Activated CD8-positive, alpha-beta T cell treated with anti-CD3 and anti-CD28 coated beads for 36 hours (primary cell): ENCODE measurements at regions of chr1 and their contacts with region 1.

Region 1: GRCh38 chr1:97920832-97921571 is at the start of gene DPYD:
- DNase-seq: peak; percentile 91
- ATAC-seq: peak; percentile 84
- H3K4me3 Mint-ChIP-seq: peak within 1 kb of the TSS; percentile 86
- H3K27ac Mint-ChIP-seq: peak within 1 kb of the TSS; percentile 93
- H3K4me1 Mint-ChIP-seq: peaks cover 47% of the 10 kb centered on the region
- H3K27me3 Mint-ChIP-seq: no peaks in the 10 kb centered on the region
- CTCF ChIP-seq: no peak
- total RNA-seq, gene DPYD: 10.7 to 10.8 TPM

Region 2: GRCh38 chr1:97832481-97832880 is 88.5 kb before region 1 on chr1:
- CTCF ChIA-PET with region 1: no interaction called
- POLR2A ChIA-PET with region 1: no interaction called
- intact Hi-C with region 1: loop called (anchors 10 kb)
- DNase-seq: no peak
- ATAC-seq: no peak
- H3K4me3 Mint-ChIP-seq: no peak overlapping the region
- H3K27ac Mint-ChIP-seq: no peak overlapping the region
- H3K4me1 Mint-ChIP-seq: peaks cover 3% of the 10 kb centered on the region
- H3K27me3 Mint-ChIP-seq: no peaks in the 10 kb centered on the region
- CTCF ChIP-seq: no peak

Region 3: DNA sequence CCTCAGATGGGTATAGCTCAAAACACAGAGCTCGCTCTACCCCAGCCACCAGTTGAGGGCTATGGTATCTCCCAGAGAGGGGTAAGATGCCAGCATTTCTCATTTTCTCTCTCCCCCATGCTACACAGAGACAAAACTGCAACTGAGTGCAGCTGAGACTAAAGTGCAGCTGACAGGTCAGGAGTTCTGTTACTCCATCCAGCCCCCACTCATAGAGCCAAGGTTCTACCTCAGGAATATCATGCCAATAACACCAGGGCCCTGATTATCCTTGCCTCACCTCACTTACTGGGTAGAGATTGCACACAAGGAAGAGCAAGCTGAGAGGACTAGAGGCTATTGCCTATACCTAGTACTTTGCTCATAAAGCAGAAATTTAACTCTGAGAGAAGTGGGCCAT is 34.8 kb before region 1 on chr1:
- CTCF ChIA-PET with region 1: no interaction called
- POLR2A ChIA-PET with region 1: no interaction called
- intact Hi-C with region 1: no loop called
- DNase-seq: no peak
- ATAC-seq: no peak
- H3K4me3 Mint-ChIP-seq: no peak overlapping the region
- H3K27ac Mint-ChIP-seq: no peak overlapping the region
- H3K4me1 Mint-ChIP-seq: peaks cover 12% of the 10 kb centered on the region
- H3K27me3 Mint-ChIP-seq: no peaks in the 10 kb centered on the region
- CTCF ChIP-seq: no peak

Region 4: GRCh38 chr1:97943354-97943753 is 22.4 kb after region 1 on chr1:
- CTCF ChIA-PET with region 1: no interaction called
- POLR2A ChIA-PET with region 1: no interaction called
- intact Hi-C with region 1: no loop called
- DNase-seq: no peak
- ATAC-seq: no peak
- H3K4me3 Mint-ChIP-seq: no peak overlapping the region
- H3K27ac Mint-ChIP-seq: no peak overlapping the region
- H3K4me1 Mint-ChIP-seq: peaks cover 25% of the 10 kb centered on the region
- H3K27me3 Mint-ChIP-seq: no peaks in the 10 kb centered on the region
- CTCF ChIP-seq: no peak

Region 5: DNA sequence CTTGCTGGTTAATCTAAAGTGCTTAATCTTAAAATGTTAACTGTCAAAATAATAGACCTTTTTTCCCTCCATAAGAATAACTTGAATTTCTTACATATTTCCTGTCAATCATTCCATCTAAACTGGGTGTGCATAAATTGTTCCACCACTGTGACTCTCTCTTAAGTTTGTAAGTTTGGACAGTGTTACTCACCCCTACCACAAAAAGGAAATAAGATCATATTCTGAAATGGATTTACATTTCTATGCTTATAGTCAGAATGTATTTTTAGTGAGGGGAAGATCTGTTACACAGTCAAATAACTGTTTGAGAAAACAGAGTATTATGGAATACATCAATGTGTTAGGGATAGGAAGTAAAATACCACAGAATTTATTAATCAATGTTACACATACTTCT is 109.5 kb after region 1 on chr1:
- CTCF ChIA-PET with region 1: no interaction called
- POLR2A ChIA-PET with region 1: no interaction called
- intact Hi-C with region 1: no loop called
- DNase-seq: no peak
- ATAC-seq: peak; percentile 85
- H3K4me3 Mint-ChIP-seq: no peak overlapping the region
- H3K27ac Mint-ChIP-seq: no peak overlapping the region
- H3K4me1 Mint-ChIP-seq: peaks cover 7% of the 10 kb centered on the region
- H3K27me3 Mint-ChIP-seq: peaks cover 10% of the 10 kb centered on the region
- CTCF ChIP-seq: no peak